Endothelial cell of umbilical vein (primary cell): ENCODE measurements at regions of chr10 and their contacts with region 1.

Region 1: GRCh38 chr10:27223964-27224363 is 16.6 kb downstream of the ACBD5 start:
- DNase-seq: peak; percentile 36
- H3K4me3 ChIP-seq: no peak overlapping the region
- H3K27ac ChIP-seq: no peak overlapping the region
- H3K4me1 ChIP-seq: no peaks in the 10 kb centered on the region
- H3K27me3 ChIP-seq: no peaks in the 10 kb centered on the region
- CTCF ChIP-seq: peak; percentile 44 to 47
- POLR2A ChIP-seq: no peak

Region 2: DNA sequence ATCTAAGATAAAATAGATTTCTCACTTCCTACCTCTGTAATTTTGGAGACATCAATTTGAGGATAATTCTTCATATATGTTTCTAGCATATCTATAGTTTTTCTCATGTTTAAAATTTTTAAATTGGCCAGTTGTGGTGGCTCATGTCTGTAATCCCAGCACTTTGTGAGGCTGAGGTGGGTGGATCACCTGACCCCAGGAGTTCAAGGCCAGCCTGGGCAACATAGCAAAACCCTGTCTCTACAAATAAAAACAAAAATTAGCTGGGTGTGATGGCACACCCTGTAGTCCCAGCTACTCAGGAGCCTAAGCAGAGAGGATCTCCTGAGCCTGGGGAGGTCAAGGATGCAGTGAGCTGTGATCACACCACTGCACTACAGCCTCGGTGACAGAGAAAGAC is 11.7 kb after region 1 on chr10:
- CTCF ChIA-PET with region 1: interaction called, 15 read pairs
- POLR2A ChIA-PET with region 1: no interaction called
- dilution Hi-C with region 1: no loop called
- intact Hi-C with region 1: no loop called
- DNase-seq: no peak
- H3K4me3 ChIP-seq: no peak overlapping the region
- H3K27ac ChIP-seq: no peak overlapping the region
- H3K4me1 ChIP-seq: peaks cover 3% of the 10 kb centered on the region
- H3K27me3 ChIP-seq: no peaks in the 10 kb centered on the region
- CTCF ChIP-seq: no peak
- POLR2A ChIP-seq: no peak

Region 3: GRCh38 chr10:27285108-27285507 is 61.1 kb after region 1 on chr10:
- CTCF ChIA-PET with region 1: interaction called, 14 read pairs
- POLR2A ChIA-PET with region 1: no interaction called
- dilution Hi-C with region 1: no loop called
- intact Hi-C with region 1: loop called (anchors 5 kb)
- DNase-seq: peak; percentile 19
- H3K4me3 ChIP-seq: no peak overlapping the region
- H3K27ac ChIP-seq: no peak overlapping the region
- H3K4me1 ChIP-seq: no peaks in the 10 kb centered on the region
- H3K27me3 ChIP-seq: no peaks in the 10 kb centered on the region
- CTCF ChIP-seq: peak in 1 of 2 donors; percentile 6
- POLR2A ChIP-seq: no peak

Region 4: DNA sequence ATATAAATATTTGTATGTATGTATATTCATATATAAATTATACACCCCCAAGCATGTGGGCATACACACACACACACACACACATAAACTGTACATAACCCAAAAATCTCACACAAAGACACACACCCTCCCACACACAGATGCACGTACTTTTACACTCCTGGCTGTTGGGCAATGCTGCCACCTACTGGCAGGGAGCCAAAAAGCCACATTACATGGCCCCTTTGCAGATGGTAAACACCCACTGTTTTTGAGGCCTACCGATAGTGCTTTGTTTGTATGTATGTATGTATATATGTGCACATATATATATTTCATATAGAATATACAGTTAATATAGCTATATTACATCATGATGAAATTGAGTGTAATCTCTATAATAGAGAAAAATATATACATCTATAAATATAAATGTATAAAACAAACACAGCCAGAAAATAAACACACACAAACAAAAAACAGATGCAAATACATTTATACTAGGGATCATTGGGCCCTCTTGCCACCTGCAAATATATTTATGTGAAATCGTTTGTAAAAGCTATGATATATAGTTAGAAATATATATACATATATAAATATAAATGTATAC is 136.7 kb after region 1 on chr10:
- CTCF ChIA-PET with region 1: interaction called, 10 read pairs
- POLR2A ChIA-PET with region 1: no interaction called
- dilution Hi-C with region 1: no loop called
- intact Hi-C with region 1: loop called (anchors 1 kb)
- DNase-seq: peak; percentile 75
- H3K4me3 ChIP-seq: no peak overlapping the region
- H3K27ac ChIP-seq: no peak overlapping the region
- H3K4me1 ChIP-seq: no peaks in the 10 kb centered on the region
- H3K27me3 ChIP-seq: peaks cover 0 to 2% of the 10 kb centered on the region in 2 experiments
- CTCF ChIP-seq: peak; percentile 79 to 82
- POLR2A ChIP-seq: no peak